Activated CD4-positive, alpha-beta T cell treated with anti-CD3 and anti-CD28 coated beads for 36 hours (primary cell): ENCODE measurements at regions of chr13 and their contacts with region 1.

Region 1: GRCh38 chr13:23599083-23599925 is 29.1 kb downstream of the TNFRSF19 start:
- DNase-seq: no peak
- ATAC-seq: no peak
- H3K4me3 Mint-ChIP-seq: no peak overlapping the region
- H3K27ac Mint-ChIP-seq: no peak overlapping the region
- H3K4me1 Mint-ChIP-seq: no peaks in the 10 kb centered on the region
- H3K27me3 Mint-ChIP-seq: peaks cover 13% of the 10 kb centered on the region

Region 2: GRCh38 chr13:23433171-23434153 is 165.8 kb before region 1 on chr13 and contains the start of gene SACS:
- CTCF ChIA-PET with region 1: no interaction called
- POLR2A ChIA-PET with region 1: no interaction called
- intact Hi-C with region 1: no loop called
- DNase-seq: no peak
- ATAC-seq: no peak
- H3K4me3 Mint-ChIP-seq: no peak within 1 kb of the TSS
- H3K27ac Mint-ChIP-seq: no peak within 1 kb of the TSS
- H3K4me1 Mint-ChIP-seq: peaks cover 6% of the 10 kb centered on the region
- H3K27me3 Mint-ChIP-seq: peaks cover 23% of the 10 kb centered on the region
- total RNA-seq, gene SACS: 33.5 to 37.1 TPM

Region 3: GRCh38 chr13:23715762-23716235 is 116.5 kb after region 1 on chr13:
- CTCF ChIA-PET with region 1: no interaction called
- POLR2A ChIA-PET with region 1: interaction called, 12 read pairs
- intact Hi-C with region 1: no loop called
- DNase-seq: peak; percentile 32
- ATAC-seq: no peak
- H3K4me3 Mint-ChIP-seq: no peak overlapping the region
- H3K27ac Mint-ChIP-seq: no peak overlapping the region
- H3K4me1 Mint-ChIP-seq: peaks cover 20% of the 10 kb centered on the region
- H3K27me3 Mint-ChIP-seq: peaks cover 3% of the 10 kb centered on the region